ENCODE measurements at regions of chr2 and their contacts with region 1.

Region 1: GRCh38 chr2:188506843-188507242 is 215.2 kb downstream of the GULP1 start:
- DNase-seq: no peak
- H3K4me3 ChIP-seq: no peak overlapping the region
- H3K27ac ChIP-seq: no peak overlapping the region
- H3K4me1 ChIP-seq: no peaks in the 10 kb centered on the region
- H3K27me3 ChIP-seq: no peaks in the 10 kb centered on the region
- CTCF ChIP-seq: no peak
- EP300 ChIP-seq: no peak
- POLR2A ChIP-seq: no peak

Region 2: GRCh38 chr2:188142636-188143295 is 364.1 kb before region 1 on chr2:
- intact Hi-C with region 1: no loop called
- DNase-seq: no peak
- H3K4me3 ChIP-seq: no peak overlapping the region
- H3K27ac ChIP-seq: no peak overlapping the region
- H3K4me1 ChIP-seq: no peaks in the 10 kb centered on the region
- H3K27me3 ChIP-seq: no peaks in the 10 kb centered on the region
- CTCF ChIP-seq: no peak
- EP300 ChIP-seq: no peak
- POLR2A ChIP-seq: no peak

Region 3: DNA sequence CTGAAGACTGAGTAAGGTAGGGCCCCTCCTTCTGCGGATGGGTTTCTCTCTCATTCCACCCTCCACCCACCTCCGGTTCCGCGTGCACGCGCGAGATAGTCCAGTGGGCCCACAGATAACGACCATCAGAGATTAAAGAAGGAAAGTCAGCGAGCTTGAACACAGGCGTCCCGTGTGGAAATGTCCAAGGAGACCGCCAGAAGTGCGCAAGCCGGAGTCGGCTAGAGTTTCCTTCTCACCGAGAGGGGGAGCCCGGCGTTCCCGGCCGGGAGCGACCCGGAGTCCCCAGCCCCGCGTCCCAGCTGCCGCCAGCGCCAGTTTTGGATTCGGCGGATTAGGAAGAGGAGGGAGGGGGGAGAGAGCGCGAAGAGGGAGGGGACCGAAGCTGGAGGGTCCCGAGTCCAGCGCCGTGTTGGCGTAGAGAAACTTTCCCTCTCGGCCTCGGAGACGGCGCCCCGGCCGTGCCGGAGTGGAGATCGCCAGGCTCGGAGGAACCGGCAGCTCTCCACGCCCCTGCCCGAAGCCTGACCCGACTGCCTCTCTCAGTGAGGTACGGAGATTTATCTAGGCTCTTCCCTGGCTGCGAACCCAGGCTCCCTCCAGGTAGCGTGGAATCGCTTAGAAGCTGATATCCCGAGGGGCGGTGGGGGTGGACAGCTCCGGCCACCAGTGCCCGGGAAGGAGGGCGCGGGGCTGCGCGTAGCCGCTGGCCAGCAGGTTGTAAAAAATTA is 215.1 kb before region 1 on chr2 and contains the start of gene GULP1:
- intact Hi-C with region 1: loop called in 3 of 4 experiments (anchors 10 kb)
- DNase-seq: peak; percentile 78 to 87 (median 80)
- H3K4me3 ChIP-seq: peak within 1 kb of the TSS; percentile 59
- H3K27ac ChIP-seq: peak within 1 kb of the TSS; percentile 96 to 100
- H3K4me1 ChIP-seq: peaks cover 2% of the 10 kb centered on the region
- H3K27me3 ChIP-seq: no peaks in the 10 kb centered on the region
- CTCF ChIP-seq: peak; percentile 58 to 65 (median 64)
- EP300 ChIP-seq: no peak
- POLR2A ChIP-seq: no peak
- total RNA-seq, gene GULP1: 41.7 to 57.7 (median 44.9) TPM

Measured in ovary (tissue), 10 donors.